ENCODE measurements at regions of chr14 and their contacts with region 1.

Region 1: GRCh38 chr14:28867571-28867970 is 101.0 kb downstream of the FOXG1 start:
- DNase-seq: no peak
- H3K4me3 ChIP-seq: no peak overlapping the region
- H3K27ac ChIP-seq: no peak overlapping the region
- H3K4me1 ChIP-seq: no peaks in the 10 kb centered on the region
- H3K27me3 ChIP-seq: no peaks in the 10 kb centered on the region
- CTCF ChIP-seq: no peak

Region 2: DNA sequence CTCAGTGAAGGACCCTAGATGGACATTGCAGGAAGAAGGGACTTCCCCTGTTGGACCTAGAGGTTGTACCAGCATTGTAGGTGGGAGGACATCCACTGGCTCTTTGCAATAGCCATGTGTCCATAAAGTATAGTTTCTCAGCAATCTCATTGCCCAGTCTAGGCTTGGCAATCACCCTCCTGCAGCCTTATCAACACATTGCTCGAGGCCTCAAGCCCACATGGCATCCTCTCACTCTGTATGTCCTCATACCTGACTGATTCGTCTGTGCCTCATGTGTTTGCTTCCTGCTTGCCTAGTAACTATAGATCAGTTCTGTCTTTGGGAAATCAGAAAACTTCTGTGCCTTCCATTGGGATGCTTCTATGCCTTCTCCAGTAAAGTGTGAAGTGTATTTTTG is 30.0 kb before region 1 on chr14:
- intact Hi-C with region 1: loop called (anchors 2 kb)
- DNase-seq: no peak
- H3K4me3 ChIP-seq: no peak overlapping the region
- H3K27ac ChIP-seq: no peak overlapping the region
- H3K4me1 ChIP-seq: no peaks in the 10 kb centered on the region
- H3K27me3 ChIP-seq: no peaks in the 10 kb centered on the region
- CTCF ChIP-seq: no peak

Region 3: GRCh38 chr14:28911521-28911920 is 44.0 kb after region 1 on chr14:
- intact Hi-C with region 1: no loop called
- DNase-seq: no peak
- H3K4me3 ChIP-seq: no peak overlapping the region
- H3K27ac ChIP-seq: no peak overlapping the region
- H3K4me1 ChIP-seq: no peaks in the 10 kb centered on the region
- H3K27me3 ChIP-seq: no peaks in the 10 kb centered on the region
- CTCF ChIP-seq: no peak

Measured in tibial artery (tissue), 4 donors.